GM10248 (cell line): ENCODE measurements at regions of chr16 and their contacts with region 1.

Region 1: GRCh38 chr16:67150833-67151396 is at the start of gene B3GNT9:
- DNase-seq: peak; percentile 75
- CTCF ChIP-seq: no peak

Region 2: GRCh38 chr16:67183627-67184328 is 32.9 kb after region 1 on chr16 and contains the start of gene MATCAP1:
- CTCF ChIA-PET with region 1: interaction called, 14 read pairs
- POLR2A ChIA-PET with region 1: no interaction called
- DNase-seq: peak; percentile 99
- CTCF ChIP-seq: no peak